ENCODE measurements at regions of chr5 and their contacts with region 1.

Region 1: GRCh38 chr5:125696762-125697161 is 726.4 kb upstream of the GRAMD2B start:
- DNase-seq: no peak
- ATAC-seq: peak; percentile 87
- H3K4me3 ChIP-seq: no peak overlapping the region
- H3K27ac ChIP-seq: peak overlapping the region; percentile 93
- H3K4me1 ChIP-seq: peaks cover 39% of the 10 kb centered on the region
- H3K27me3 ChIP-seq: no peaks in the 10 kb centered on the region
- CTCF ChIP-seq: no peak

Region 2: GRCh38 chr5:124724357-124725039 is 972.3 kb before region 1 on chr5:
- CTCF ChIA-PET with region 1: no interaction called
- POLR2A ChIA-PET with region 1: interaction called, 14 read pairs
- in situ Hi-C with region 1: no loop called
- intact Hi-C with region 1: no loop called
- DNase-seq: no peak
- ATAC-seq: peak; percentile 17; the same call in 1 of the 2 replicates
- H3K4me3 ChIP-seq: peak overlapping the region; percentile 0 to 26; a peak in 3 of 4 replicates
- H3K27ac ChIP-seq: peak overlapping the region; percentile 76
- H3K4me1 ChIP-seq: peaks cover 83% of the 10 kb centered on the region
- H3K27me3 ChIP-seq: no peaks in the 10 kb centered on the region
- CTCF ChIP-seq: no peak

Region 3: GRCh38 chr5:125835293-125836172 is 138.8 kb after region 1 on chr5:
- CTCF ChIA-PET with region 1: no interaction called
- POLR2A ChIA-PET with region 1: no interaction called
- in situ Hi-C with region 1: no loop called
- intact Hi-C with region 1: loop called (anchors 10 kb)
- DNase-seq: peak; percentile 22
- ATAC-seq: peak; percentile 85
- H3K4me3 ChIP-seq: no peak overlapping the region
- H3K27ac ChIP-seq: peak overlapping the region; percentile 66
- H3K4me1 ChIP-seq: peaks cover 5% of the 10 kb centered on the region
- H3K27me3 ChIP-seq: no peaks in the 10 kb centered on the region
- CTCF ChIP-seq: peak; percentile 85

Region 4: GRCh38 chr5:125870256-125870655 is 173.5 kb after region 1 on chr5:
- CTCF ChIA-PET with region 1: no interaction called
- POLR2A ChIA-PET with region 1: no interaction called
- in situ Hi-C with region 1: no loop called
- intact Hi-C with region 1: no loop called
- DNase-seq: no peak
- ATAC-seq: no peak
- H3K4me3 ChIP-seq: no peak overlapping the region
- H3K27ac ChIP-seq: no peak overlapping the region
- H3K4me1 ChIP-seq: no peaks in the 10 kb centered on the region
- H3K27me3 ChIP-seq: no peaks in the 10 kb centered on the region
- CTCF ChIP-seq: no peak